ENCODE measurements at regions of chr6 and their contacts with region 1.

Region 1: GRCh38 chr6:56764081-56764566 is 121.4 kb upstream of the DST start:
- DNase-seq: peak; percentile 59
- H3K4me3 Mint-ChIP-seq: no peak overlapping the region
- H3K27ac Mint-ChIP-seq: no peak overlapping the region
- H3K4me1 Mint-ChIP-seq: peaks cover 23% of the 10 kb centered on the region
- H3K27me3 Mint-ChIP-seq: no peaks in the 10 kb centered on the region
- CTCF ChIP-seq: peak; percentile 49

Region 2: GRCh38 chr6:55694148-55694547 is 1070.0 kb before region 1 on chr6:
- CTCF ChIA-PET with region 1: no interaction called
- POLR2A ChIA-PET with region 1: no interaction called
- intact Hi-C with region 1: no loop called
- DNase-seq: peak; percentile 29
- H3K4me3 Mint-ChIP-seq: no peak overlapping the region
- H3K27ac Mint-ChIP-seq: no peak overlapping the region
- H3K4me1 Mint-ChIP-seq: no peaks in the 10 kb centered on the region
- H3K27me3 Mint-ChIP-seq: no peaks in the 10 kb centered on the region
- CTCF ChIP-seq: no peak

Region 3: GRCh38 chr6:56724455-56724854 is 39.7 kb before region 1 on chr6:
- CTCF ChIA-PET with region 1: interaction called, 11 read pairs
- POLR2A ChIA-PET with region 1: interaction called, 7 read pairs
- intact Hi-C with region 1: no loop called
- DNase-seq: no peak
- H3K4me3 Mint-ChIP-seq: no peak overlapping the region
- H3K27ac Mint-ChIP-seq: no peak overlapping the region
- H3K4me1 Mint-ChIP-seq: peaks cover 41% of the 10 kb centered on the region
- H3K27me3 Mint-ChIP-seq: no peaks in the 10 kb centered on the region
- CTCF ChIP-seq: no peak

Region 4: GRCh38 chr6:56749632-56750151 is 14.4 kb before region 1 on chr6:
- CTCF ChIA-PET with region 1: interaction called, 22 read pairs
- POLR2A ChIA-PET with region 1: interaction called, 29 read pairs
- intact Hi-C with region 1: no loop called
- DNase-seq: peak; percentile 88
- H3K4me3 Mint-ChIP-seq: peak overlapping the region; percentile 65
- H3K27ac Mint-ChIP-seq: peak overlapping the region; percentile 91
- H3K4me1 Mint-ChIP-seq: peaks cover 51% of the 10 kb centered on the region
- H3K27me3 Mint-ChIP-seq: no peaks in the 10 kb centered on the region
- CTCF ChIP-seq: no peak

Region 5: GRCh38 chr6:56843573-56844349 is 79.6 kb after region 1 on chr6:
- CTCF ChIA-PET with region 1: interaction called, 208 read pairs
- POLR2A ChIA-PET with region 1: interaction called, 7 read pairs
- intact Hi-C with region 1: loop called (anchors 5 kb)
- DNase-seq: peak; percentile 65
- H3K4me3 Mint-ChIP-seq: peak overlapping the region; percentile 92
- H3K27ac Mint-ChIP-seq: peak overlapping the region; percentile 88
- H3K4me1 Mint-ChIP-seq: peaks cover 16% of the 10 kb centered on the region
- H3K27me3 Mint-ChIP-seq: no peaks in the 10 kb centered on the region
- CTCF ChIP-seq: peak; percentile 33

Region 6: GRCh38 chr6:56851541-56852259 is 87.6 kb after region 1 on chr6:
- CTCF ChIA-PET with region 1: interaction called, 208 read pairs
- POLR2A ChIA-PET with region 1: interaction called, 3 read pairs
- intact Hi-C with region 1: no loop called
- DNase-seq: peak; percentile 86
- H3K4me3 Mint-ChIP-seq: peak overlapping the region; percentile 81
- H3K27ac Mint-ChIP-seq: peak overlapping the region; percentile 56
- H3K4me1 Mint-ChIP-seq: peaks cover 35% of the 10 kb centered on the region
- H3K27me3 Mint-ChIP-seq: no peaks in the 10 kb centered on the region
- CTCF ChIP-seq: peak; percentile 57